Vagina (tissue), 2 donors: ENCODE measurements at regions of chr16 and their contacts with region 1.

Region 1: DNA sequence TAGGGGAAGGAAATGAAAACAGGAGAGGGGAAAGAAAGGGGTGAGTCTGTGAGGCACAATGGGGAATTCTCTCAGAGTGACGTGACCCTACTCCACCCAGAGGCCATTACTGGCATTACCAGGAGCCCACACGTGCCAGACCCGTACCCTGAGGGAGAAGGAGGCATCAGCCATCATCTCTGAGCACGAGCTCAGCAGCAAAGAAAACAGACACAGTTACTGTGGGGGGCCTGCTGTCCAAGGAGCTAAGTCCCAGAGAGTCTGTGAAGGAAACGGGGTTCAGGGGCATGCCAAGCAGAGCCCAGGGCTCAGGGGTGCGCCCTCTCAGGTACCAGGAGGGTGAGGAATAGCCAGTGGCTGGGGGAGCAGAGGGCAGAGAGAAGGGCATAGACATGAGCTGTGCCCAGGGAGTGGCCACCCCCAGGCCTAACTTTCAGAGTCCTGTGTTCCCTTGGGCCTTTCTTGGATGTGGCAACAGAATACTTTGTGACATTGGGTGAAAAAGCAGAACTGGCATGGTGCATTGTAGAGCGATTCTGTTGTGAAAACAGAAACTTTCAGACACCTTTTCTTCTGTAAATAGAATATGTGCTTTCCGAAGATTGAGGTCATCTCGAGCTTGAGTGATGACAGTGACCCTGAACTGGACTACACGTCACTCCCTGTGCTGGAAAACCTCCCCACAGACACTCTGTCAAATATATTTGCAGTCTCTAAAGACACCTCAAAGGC is 11.3 kb downstream of the TAF1C start:
- DNase-seq: no peak
- H3K4me3 ChIP-seq: no peak overlapping the region
- H3K27ac ChIP-seq: peak overlapping the region; percentile 80
- H3K4me1 ChIP-seq: peaks cover 36% of the 10 kb centered on the region
- H3K27me3 ChIP-seq: no peaks in the 10 kb centered on the region
- CTCF ChIP-seq: peak in 1 of 3 experiments; percentile 49
- POLR2A ChIP-seq: no peak

Region 2: DNA sequence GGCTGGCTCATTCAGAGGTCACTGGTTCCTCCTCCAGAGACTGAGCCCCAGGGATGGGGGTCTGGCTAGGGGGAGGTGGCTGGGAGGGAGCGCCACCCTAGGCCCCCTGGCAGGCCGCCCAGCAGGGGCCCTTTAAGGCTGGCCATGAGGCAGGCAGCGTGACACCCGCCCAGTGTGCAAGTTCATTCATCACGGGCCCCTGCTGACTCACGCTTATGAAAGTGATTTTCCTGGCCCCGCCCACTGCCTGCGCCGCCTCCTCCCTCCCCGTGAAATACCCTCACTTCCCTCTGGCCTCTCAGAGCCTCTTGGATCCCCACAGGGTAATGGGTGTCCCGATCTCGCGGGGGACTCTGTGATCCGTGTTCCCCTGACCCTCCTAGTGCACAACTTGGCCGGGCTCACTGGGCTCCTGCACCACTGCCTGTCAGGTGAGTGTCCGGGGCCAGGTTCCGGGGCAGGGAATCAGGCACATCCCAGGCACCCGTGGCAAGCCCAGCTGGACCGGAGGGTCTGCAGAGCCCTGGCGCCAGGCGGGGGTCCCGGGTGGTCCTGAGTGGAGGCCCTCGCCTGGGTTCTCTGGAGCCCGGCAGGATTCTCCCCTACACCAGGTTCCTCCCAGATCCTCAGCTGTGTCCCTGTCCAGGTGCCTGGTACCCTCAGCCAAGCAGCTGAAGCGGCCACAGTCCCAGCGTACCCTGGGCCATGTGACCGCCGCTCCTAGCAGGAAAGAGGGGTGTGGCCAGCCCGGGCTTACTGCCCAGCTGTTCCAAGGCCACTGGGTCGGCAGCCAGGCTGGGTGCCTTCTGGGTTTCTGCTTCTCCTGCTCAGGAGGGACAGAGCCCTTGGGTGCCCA is 222.3 kb before region 1 on chr16 and contains the start of gene OSGIN1:
- intact Hi-C with region 1: loop called (anchors 10 kb)
- DNase-seq: peak in 1 of 2 donors; percentile 97
- H3K4me3 ChIP-seq: peak within 1 kb of the TSS; percentile 52 to 64
- H3K27ac ChIP-seq: peak within 1 kb of the TSS; percentile 88
- H3K4me1 ChIP-seq: peaks cover 31% of the 10 kb centered on the region
- H3K27me3 ChIP-seq: no peaks in the 10 kb centered on the region
- CTCF ChIP-seq: no peak
- POLR2A ChIP-seq: peak in 1 of 2 donors; percentile 69
- total RNA-seq, gene OSGIN1: 6.4 TPM

Region 3: GRCh38 chr16:84144209-84144858 is 31.2 kb before region 1 on chr16:
- intact Hi-C with region 1: no loop called
- DNase-seq: no peak
- H3K4me3 ChIP-seq: peak overlapping the region; percentile 69 to 100
- H3K27ac ChIP-seq: peak overlapping the region; percentile 89
- H3K4me1 ChIP-seq: peaks cover 16% of the 10 kb centered on the region
- H3K27me3 ChIP-seq: no peaks in the 10 kb centered on the region
- CTCF ChIP-seq: no peak
- POLR2A ChIP-seq: no peak